Activated B cell treated with CpG ODN at 0.5 μM for 24 hours (primary cell): ENCODE measurements at regions of chr19 and their contacts with region 1.

Region 1: DNA sequence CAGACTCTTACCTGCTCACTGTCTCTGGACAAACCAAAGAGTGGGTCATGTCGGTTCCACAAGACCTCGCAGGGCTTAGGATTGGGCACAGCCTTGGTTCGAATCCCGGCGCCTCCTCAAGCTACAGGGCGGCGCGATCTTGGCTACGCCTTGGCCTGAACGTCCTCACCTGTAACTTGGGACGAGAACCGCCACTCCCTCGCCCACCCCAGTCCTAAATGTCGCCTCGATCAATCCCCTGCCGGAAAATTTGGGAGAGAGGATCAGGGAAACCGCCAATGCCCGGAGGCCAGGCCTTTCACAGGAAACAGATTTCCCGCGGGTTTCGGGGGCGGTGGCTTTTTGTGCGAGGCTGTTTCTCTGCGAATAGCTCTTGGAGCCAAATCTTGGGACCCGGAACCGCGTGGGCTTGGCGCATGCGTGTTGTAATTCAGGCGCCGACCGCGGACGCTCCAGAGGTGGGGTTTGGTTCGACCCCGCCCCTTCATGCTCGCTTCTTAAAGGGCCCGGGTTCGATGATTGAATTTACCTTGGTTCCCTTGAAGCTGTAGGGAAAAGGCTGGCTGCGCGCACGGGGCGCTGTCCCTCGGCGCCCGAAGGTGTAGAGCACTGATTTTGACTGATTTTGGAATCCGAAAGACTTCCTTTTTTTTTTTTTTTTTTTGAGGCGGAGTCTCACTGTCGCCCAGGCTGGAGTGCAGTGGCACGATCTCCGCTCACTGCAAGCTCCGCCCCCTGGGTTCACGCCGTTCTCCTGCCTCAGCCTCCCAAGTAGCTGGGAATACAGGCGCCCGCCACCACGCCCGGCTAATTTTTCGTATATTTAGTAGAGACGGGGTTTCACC is at the start of gene NR2C2AP:
- DNase-seq: peak; percentile 87
- ATAC-seq: peak; percentile 92
- H3K4me3 Mint-ChIP-seq: peak within 1 kb of the TSS; percentile 94
- H3K27ac Mint-ChIP-seq: peak within 1 kb of the TSS; percentile 86
- H3K4me1 Mint-ChIP-seq: peaks cover 37% of the 10 kb centered on the region
- H3K27me3 Mint-ChIP-seq: peaks cover 2% of the 10 kb centered on the region
- CTCF ChIP-seq: no peak
- total RNA-seq, gene NR2C2AP: 37.1 and 39.2 TPM in 2 replicates

Region 2: DNA sequence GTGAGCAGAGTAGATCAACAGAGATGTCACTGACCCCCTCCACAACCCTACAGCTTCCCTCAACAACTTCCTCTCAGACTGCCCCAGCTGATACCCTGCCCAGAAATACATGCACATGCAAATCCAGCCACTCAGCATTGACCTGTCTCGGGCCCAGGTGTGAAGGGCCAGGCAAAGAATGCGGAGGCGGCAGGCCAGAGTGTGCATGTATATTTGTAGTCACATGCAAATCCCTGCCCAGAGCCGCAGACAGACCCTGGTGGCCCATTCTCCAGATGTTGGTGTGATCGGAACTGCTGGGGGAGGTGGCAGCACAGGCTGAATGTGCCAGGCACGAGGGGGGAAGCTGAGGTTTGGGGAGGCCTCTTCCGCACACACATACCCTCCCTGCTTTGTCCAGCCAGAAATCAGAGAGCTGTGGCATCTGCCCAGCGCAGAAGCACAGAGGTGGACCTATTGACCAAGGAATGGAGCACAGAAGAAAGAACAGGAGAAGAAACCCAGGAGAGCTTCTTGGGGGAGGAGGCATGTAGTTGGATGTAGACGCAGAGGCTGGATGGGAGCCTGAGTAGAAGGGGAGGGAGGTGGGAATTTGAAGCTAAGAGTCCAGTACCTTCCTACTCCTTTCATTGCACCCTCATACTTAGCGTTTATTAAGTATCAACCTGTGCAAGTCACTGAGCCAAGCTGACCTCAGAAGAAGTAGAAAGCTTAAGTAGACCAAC is 47.6 kb before region 1 on chr19:
- CTCF ChIA-PET with region 1: no interaction called
- POLR2A ChIA-PET with region 1: interaction called, 17 read pairs
- intact Hi-C with region 1: no loop called
- DNase-seq: no peak
- ATAC-seq: peak; percentile 56
- H3K4me3 Mint-ChIP-seq: peak overlapping the region; percentile 57
- H3K27ac Mint-ChIP-seq: peak overlapping the region; percentile 74
- H3K4me1 Mint-ChIP-seq: peaks cover 62% of the 10 kb centered on the region
- H3K27me3 Mint-ChIP-seq: no peaks in the 10 kb centered on the region
- CTCF ChIP-seq: no peak

Region 3: GRCh38 chr19:19192078-19192882 is 11.0 kb before region 1 on chr19 and contains the starts of genes BORCS8 and RFXANK:
- CTCF ChIA-PET with region 1: no interaction called
- POLR2A ChIA-PET with region 1: interaction called, 69 read pairs
- intact Hi-C with region 1: loop called (anchors 1 kb)
- DNase-seq: peak; percentile 91
- ATAC-seq: peak; percentile 85
- H3K4me3 Mint-ChIP-seq: peak within 1 kb of the TSS; percentile 99
- H3K27ac Mint-ChIP-seq: peak within 1 kb of the TSS; percentile 99
- H3K4me1 Mint-ChIP-seq: peaks cover 49% of the 10 kb centered on the region
- H3K27me3 Mint-ChIP-seq: no peaks in the 10 kb centered on the region
- CTCF ChIP-seq: no peak
- total RNA-seq, gene BORCS8: 51.8 and 52.3 TPM in 2 replicates
- total RNA-seq, gene RFXANK: 95.4 and 96.9 TPM in 2 replicates

Region 4: DNA sequence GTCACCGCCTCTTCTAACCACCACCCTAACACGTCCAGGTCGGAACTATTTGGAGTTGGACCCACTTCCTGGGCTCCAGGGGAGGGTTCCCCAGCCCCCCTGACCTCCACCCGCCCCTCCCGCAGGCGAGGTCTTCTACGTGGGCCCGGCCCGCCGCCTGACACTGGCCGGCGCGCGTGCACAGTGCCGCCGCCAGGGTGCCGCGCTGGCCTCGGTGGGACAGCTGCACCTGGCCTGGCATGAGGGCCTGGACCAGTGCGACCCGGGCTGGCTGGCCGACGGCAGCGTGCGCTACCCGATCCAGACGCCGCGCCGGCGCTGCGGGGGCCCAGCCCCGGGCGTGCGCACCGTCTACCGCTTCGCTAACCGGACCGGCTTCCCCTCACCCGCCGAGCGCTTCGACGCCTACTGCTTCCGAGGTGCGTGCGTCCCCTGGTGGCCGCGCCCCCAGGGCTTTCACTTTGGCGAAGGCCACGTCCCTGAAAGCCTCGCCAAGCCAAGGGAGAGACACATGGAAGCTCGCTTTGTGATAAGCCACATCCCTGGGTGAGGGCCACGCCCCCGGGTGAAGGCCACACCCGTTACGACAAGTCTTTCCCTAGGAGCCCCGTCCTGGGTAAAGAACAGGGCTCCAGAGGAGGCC is 21.7 kb after region 1 on chr19:
- CTCF ChIA-PET with region 1: no interaction called
- POLR2A ChIA-PET with region 1: no interaction called
- intact Hi-C with region 1: loop called (anchors 1 kb)
- DNase-seq: peak; percentile 71
- ATAC-seq: peak; percentile 96
- H3K4me3 Mint-ChIP-seq: peak overlapping the region; percentile 75
- H3K27ac Mint-ChIP-seq: no peak overlapping the region
- H3K4me1 Mint-ChIP-seq: peaks cover 4% of the 10 kb centered on the region
- H3K27me3 Mint-ChIP-seq: peaks cover 19% of the 10 kb centered on the region
- CTCF ChIP-seq: peak; percentile 20

Region 5: GRCh38 chr19:19686580-19686979 is 483.3 kb after region 1 on chr19:
- CTCF ChIA-PET with region 1: no interaction called
- POLR2A ChIA-PET with region 1: no interaction called
- intact Hi-C with region 1: no loop called
- DNase-seq: no peak
- ATAC-seq: no peak
- H3K4me3 Mint-ChIP-seq: no peak overlapping the region
- H3K27ac Mint-ChIP-seq: no peak overlapping the region
- H3K4me1 Mint-ChIP-seq: no peaks in the 10 kb centered on the region
- H3K27me3 Mint-ChIP-seq: no peaks in the 10 kb centered on the region
- CTCF ChIP-seq: no peak

Region 6: GRCh38 chr19:19745496-19746285 is 542.5 kb after region 1 on chr19:
- CTCF ChIA-PET with region 1: no interaction called
- POLR2A ChIA-PET with region 1: no interaction called
- intact Hi-C with region 1: no loop called
- DNase-seq: no peak
- ATAC-seq: peak; percentile 28
- H3K4me3 Mint-ChIP-seq: no peak overlapping the region
- H3K27ac Mint-ChIP-seq: no peak overlapping the region
- H3K4me1 Mint-ChIP-seq: no peaks in the 10 kb centered on the region
- H3K27me3 Mint-ChIP-seq: no peaks in the 10 kb centered on the region
- CTCF ChIP-seq: no peak